K562 (cell line): ENCODE measurements at regions of chr1 and their contacts with region 1.

Region 1: GRCh38 chr1:212827824-212828278 is 19.6 kb downstream of the SPATA45 start:
- DNase-seq: no peak
- ATAC-seq: no peak
- H3K4me3 ChIP-seq: no peak overlapping the region
- H3K27ac ChIP-seq: no peak overlapping the region
- H3K4me1 ChIP-seq: no peaks in the 10 kb centered on the region; a peak in 1 of 5 replicates
- H3K27me3 ChIP-seq: 0 out of 5 replicates have a peak, but pooled peaks cover 0 to 4% of the 10 kb centered on the region in 2 experiments
- CTCF ChIP-seq: no peak
- EP300 ChIP-seq: no peak
- POLR2A ChIP-seq: no peak
- RAD21 ChIP-seq: no peak

Region 2: DNA sequence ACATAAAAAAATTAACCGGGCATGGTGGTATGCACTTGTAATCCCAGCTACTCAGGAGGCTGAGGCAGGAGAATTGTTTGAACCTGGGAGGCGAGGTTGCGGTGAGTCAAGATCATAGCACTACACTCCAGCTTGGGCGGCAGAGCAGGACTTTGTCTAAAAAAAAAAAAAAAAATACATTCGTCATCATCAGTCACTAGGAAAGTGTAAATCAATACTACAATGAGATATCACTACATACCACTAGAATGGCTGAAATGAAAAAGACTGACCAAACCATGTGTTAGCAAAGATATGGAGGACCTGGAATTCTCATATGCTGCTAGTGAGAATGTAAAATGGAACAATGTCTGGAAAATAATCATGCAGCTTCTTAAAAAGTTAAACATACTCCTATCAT is 10.3 kb after region 1 on chr1:
- CTCF ChIA-PET with region 1: no interaction called
- POLR2A ChIA-PET with region 1: interaction called, 3 read pairs
- in situ Hi-C with region 1: no loop called
- intact Hi-C with region 1: loop called (anchors 1 kb)
- DNase-seq: no peak
- ATAC-seq: no peak
- H3K4me3 ChIP-seq: no peak overlapping the region
- H3K27ac ChIP-seq: no peak overlapping the region
- H3K4me1 ChIP-seq: no peaks in the 10 kb centered on the region
- H3K27me3 ChIP-seq: no peaks in the 10 kb centered on the region
- CTCF ChIP-seq: no peak
- EP300 ChIP-seq: no peak
- POLR2A ChIP-seq: no peak
- RAD21 ChIP-seq: no peak